Common myeloid progenitor, CD34-positive (primary cell): ENCODE measurements at regions of chr21 and their contacts with region 1.

Region 1: DNA sequence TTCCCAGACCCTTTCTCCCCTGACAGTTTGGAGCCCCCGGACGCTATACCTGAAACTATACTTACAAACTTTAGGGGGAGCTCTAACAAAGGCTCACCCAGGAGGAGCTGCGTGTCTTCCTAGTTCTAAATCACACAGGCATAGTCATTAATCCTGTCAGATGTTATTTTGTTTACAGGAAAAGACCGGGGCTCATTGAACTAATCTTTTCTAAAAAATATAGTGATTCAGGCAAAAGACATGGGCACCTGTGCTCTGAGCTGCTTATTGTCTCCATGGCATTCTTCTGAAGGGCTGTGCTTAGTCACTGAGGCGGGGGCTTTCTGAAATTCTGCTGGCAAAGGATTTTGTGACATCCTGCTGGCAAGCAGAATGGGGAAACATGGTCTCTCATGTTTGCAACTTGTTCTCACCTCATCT is 1577.0 kb downstream of the NCAM2 start:
- DNase-seq: peak; percentile 84 to 97 (median 96)
- H3K4me3 ChIP-seq: peak overlapping the region in 6 of 7 experiments; percentile 5 to 66 (median 35)
- H3K27ac ChIP-seq: peak overlapping the region; percentile 82 to 85
- H3K4me1 ChIP-seq: peaks cover 0 to 12% (median 3%) of the 10 kb centered on the region in 4 experiments
- H3K27me3 ChIP-seq: no peaks in the 10 kb centered on the region

Region 2: GRCh38 chr21:22791986-22792560 is 216.9 kb after region 1 on chr21:
- CTCF ChIA-PET with region 1: interaction called, 10 read pairs
- POLR2A ChIA-PET with region 1: no interaction called
- DNase-seq: peak; percentile 59 to 81 (median 68)
- H3K4me3 ChIP-seq: no peak overlapping the region
- H3K27ac ChIP-seq: no peak overlapping the region
- H3K4me1 ChIP-seq: no peaks in the 10 kb centered on the region
- H3K27me3 ChIP-seq: no peaks in the 10 kb centered on the region